ENCODE measurements at regions of chr2 and their contacts with region 1.

Region 1: DNA sequence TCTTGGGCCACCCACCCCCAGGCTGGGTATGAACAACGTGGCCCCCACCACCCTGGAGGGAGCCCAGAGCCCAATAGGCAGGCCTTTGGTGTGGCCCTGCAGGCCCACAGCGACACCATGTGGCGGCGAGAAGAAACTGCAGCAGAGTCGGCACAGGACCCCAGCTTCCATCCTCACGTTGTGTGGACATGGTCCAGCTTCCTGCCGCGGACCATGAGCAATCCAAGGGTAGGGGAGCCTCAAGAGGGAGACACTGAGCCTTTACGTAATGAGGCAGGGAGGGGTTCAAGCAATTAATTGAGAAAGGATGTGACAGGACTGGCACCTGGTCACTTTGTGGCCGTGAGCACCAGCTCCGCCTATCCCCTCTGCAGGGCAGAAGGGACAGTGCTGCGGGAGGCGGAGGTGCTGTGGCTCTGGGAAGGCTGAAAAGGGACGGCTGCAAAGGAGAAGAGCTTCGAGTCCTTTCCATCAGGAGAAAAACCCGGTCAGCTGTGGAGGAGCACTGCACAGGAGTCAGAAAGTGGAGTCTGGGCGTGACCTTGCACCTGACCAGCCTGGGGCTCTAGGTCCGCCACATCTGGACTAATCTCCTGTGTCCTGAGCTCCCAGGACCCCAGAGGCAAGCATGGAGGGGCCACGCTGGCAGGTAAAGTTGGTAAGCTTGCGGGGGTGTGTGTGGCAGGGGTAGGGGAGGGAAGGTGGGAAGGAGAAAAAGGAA is 44.8 kb downstream of the TMEM37 start:
- DNase-seq: peak; percentile 36 to 56
- ATAC-seq: peak; percentile 60 to 81 (median 78)
- H3K4me3 ChIP-seq: no peak overlapping the region
- H3K4me3 Mint-ChIP-seq: no peak overlapping the region
- H3K27ac ChIP-seq: no peak overlapping the region
- H3K27ac Mint-ChIP-seq: no peak overlapping the region
- H3K4me1 ChIP-seq: no peaks in the 10 kb centered on the region
- H3K4me1 Mint-ChIP-seq: peaks cover 5% of the 10 kb centered on the region in 2 donors
- H3K27me3 ChIP-seq: no peaks in the 10 kb centered on the region
- H3K27me3 Mint-ChIP-seq: peaks cover 0 to 3% of the 10 kb centered on the region in 2 donors
- CTCF ChIP-seq: peak; percentile 91

Region 2: GRCh38 chr2:117639401-117639800 is 1837.1 kb before region 1 on chr2:
- intact Hi-C with region 1: no loop called
- DNase-seq: no peak
- ATAC-seq: no peak
- H3K4me3 ChIP-seq: no peak overlapping the region
- H3K4me3 Mint-ChIP-seq: no peak overlapping the region
- H3K27ac ChIP-seq: no peak overlapping the region
- H3K27ac Mint-ChIP-seq: no peak overlapping the region
- H3K4me1 ChIP-seq: no peaks in the 10 kb centered on the region
- H3K4me1 Mint-ChIP-seq: no peaks in the 10 kb centered on the region
- H3K27me3 ChIP-seq: no peaks in the 10 kb centered on the region
- H3K27me3 Mint-ChIP-seq: no peaks in the 10 kb centered on the region
- CTCF ChIP-seq: no peak

Region 3: GRCh38 chr2:119218478-119219064 is 257.9 kb before region 1 on chr2:
- intact Hi-C with region 1: loop called (anchors 5 kb)
- DNase-seq: peak in 1 of 2 donors; percentile 10
- ATAC-seq: peak in 1 of 3 donors; percentile 45
- H3K4me3 ChIP-seq: no peak overlapping the region
- H3K4me3 Mint-ChIP-seq: no peak overlapping the region
- H3K27ac ChIP-seq: no peak overlapping the region
- H3K27ac Mint-ChIP-seq: peak overlapping the region in 1 of 2 donors; percentile 57
- H3K4me1 ChIP-seq: peaks cover 13% of the 10 kb centered on the region
- H3K4me1 Mint-ChIP-seq: peaks cover 6 to 13% of the 10 kb centered on the region in 2 donors
- H3K27me3 ChIP-seq: no peaks in the 10 kb centered on the region
- H3K27me3 Mint-ChIP-seq: no peaks in the 10 kb centered on the region
- CTCF ChIP-seq: no peak

Region 4: DNA sequence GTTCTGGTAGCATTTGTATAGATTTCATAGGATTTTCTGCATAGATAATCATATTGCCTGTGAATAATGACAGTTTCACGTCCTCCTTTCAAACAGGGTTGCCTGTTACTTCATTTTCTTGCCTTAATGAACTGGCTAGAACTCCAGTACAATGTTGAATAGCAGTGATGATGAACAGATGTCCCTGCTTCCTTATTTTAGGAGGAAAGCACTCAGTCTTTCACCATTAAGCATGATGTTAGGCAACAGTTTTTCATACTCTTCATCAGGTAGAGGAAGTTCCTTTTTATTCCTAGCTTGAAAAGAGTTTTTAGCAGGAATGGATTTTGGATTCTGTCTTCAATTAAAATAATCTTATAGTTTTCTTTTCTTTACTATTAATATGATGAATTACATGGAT is 149.5 kb before region 1 on chr2:
- intact Hi-C with region 1: no loop called
- DNase-seq: no peak
- ATAC-seq: no peak
- H3K4me3 ChIP-seq: no peak overlapping the region
- H3K4me3 Mint-ChIP-seq: no peak overlapping the region
- H3K27ac ChIP-seq: no peak overlapping the region
- H3K27ac Mint-ChIP-seq: no peak overlapping the region
- H3K4me1 ChIP-seq: no peaks in the 10 kb centered on the region
- H3K4me1 Mint-ChIP-seq: no peaks in the 10 kb centered on the region
- H3K27me3 ChIP-seq: no peaks in the 10 kb centered on the region
- H3K27me3 Mint-ChIP-seq: no peaks in the 10 kb centered on the region
- CTCF ChIP-seq: no peak

Region 5: DNA sequence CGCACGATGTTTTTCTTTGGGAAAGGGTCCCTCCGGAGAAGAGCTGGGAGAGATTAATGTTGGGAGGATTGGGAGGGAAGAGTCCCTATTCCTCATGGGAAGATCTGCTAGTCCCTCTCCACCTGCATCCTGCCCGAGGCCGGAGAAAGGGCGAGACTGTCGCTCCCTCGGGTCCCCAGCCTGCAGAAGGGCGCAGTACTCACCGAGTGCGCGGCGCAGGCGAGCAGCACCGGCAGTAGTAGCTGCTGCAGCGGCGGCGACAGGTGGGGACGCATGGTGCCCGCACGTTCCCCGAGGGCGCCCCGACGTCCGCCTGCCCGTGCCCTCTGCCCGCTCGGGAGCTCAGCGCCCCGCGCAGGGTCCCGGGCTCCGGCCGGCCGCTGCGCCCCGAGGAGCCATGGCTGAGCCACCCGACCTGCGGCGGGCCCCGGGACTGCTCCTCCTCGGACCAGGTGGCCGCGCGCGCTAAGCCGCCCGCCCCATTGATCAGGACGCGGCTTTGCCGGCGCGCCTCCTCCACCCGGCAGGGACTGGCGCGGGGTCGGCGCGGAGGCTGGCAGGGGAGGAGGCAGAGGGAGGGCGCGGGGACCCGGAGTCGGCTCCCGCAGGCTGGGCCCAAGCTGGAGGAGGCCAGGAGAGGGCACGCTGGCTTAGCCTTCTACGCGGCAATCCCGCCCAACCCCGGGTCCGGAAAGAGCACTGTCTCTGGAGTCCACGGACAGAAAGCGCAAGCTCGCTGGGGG is 47.7 kb after region 1 on chr2 and contains the start of gene SCTR:
- intact Hi-C with region 1: no loop called
- DNase-seq: no peak
- ATAC-seq: no peak
- H3K4me3 ChIP-seq: no peak within 1 kb of the TSS
- H3K4me3 Mint-ChIP-seq: no peak within 1 kb of the TSS
- H3K27ac ChIP-seq: no peak within 1 kb of the TSS
- H3K27ac Mint-ChIP-seq: no peak within 1 kb of the TSS
- H3K4me1 ChIP-seq: no peaks in the 10 kb centered on the region
- H3K4me1 Mint-ChIP-seq: peaks cover 0 to 5% of the 10 kb centered on the region in 2 donors
- H3K27me3 ChIP-seq: no peaks in the 10 kb centered on the region
- H3K27me3 Mint-ChIP-seq: peaks cover 48 to 50% of the 10 kb centered on the region in 2 donors
- CTCF ChIP-seq: no peak
- total RNA-seq, gene SCTR: not detected

Measured in natural killer cell (primary cell).